Ovary (tissue), 10 donors: ENCODE measurements at regions of chr16 and their contacts with region 1.

Region 1: GRCh38 chr16:636206-637080 is at the start of gene METTL26:
- DNase-seq: peak; percentile 95 to 96 (median 95)
- H3K4me3 ChIP-seq: peak within 1 kb of the TSS; percentile 88
- H3K27ac ChIP-seq: peak within 1 kb of the TSS; percentile 84 to 96
- H3K4me1 ChIP-seq: peaks cover 10% of the 10 kb centered on the region
- H3K27me3 ChIP-seq: no peaks in the 10 kb centered on the region
- CTCF ChIP-seq: peak in 1 of 3 donors; percentile 29
- EP300 ChIP-seq: no peak
- POLR2A ChIP-seq: peak; percentile 66
- total RNA-seq, gene METTL26: 61.8 to 139 (median 75.9) TPM

Region 2: GRCh38 chr16:700684-701584 is 64.5 kb after region 1 on chr16:
- intact Hi-C with region 1: no loop called
- DNase-seq: peak in 2 of 5 donors; percentile 66 to 75
- H3K4me3 ChIP-seq: no peak overlapping the region
- H3K27ac ChIP-seq: no peak overlapping the region
- H3K4me1 ChIP-seq: no peaks in the 10 kb centered on the region
- H3K27me3 ChIP-seq: peaks cover 7% of the 10 kb centered on the region
- CTCF ChIP-seq: no peak
- EP300 ChIP-seq: no peak
- POLR2A ChIP-seq: no peak

Region 3: GRCh38 chr16:1959269-1960049 is 1323.0 kb after region 1 on chr16 and contains the start of gene NDUFB10:
- intact Hi-C with region 1: loop called in 1 of 4 experiments (anchors 10 kb)
- DNase-seq: peak; percentile 87 to 95 (median 93)
- H3K4me3 ChIP-seq: peak within 1 kb of the TSS; percentile 75
- H3K27ac ChIP-seq: peak within 1 kb of the TSS in 1 of 2 donors; percentile 55
- H3K4me1 ChIP-seq: peaks cover 9% of the 10 kb centered on the region
- H3K27me3 ChIP-seq: no peaks in the 10 kb centered on the region
- CTCF ChIP-seq: peak; percentile 68 to 74 (median 70)
- EP300 ChIP-seq: no peak
- POLR2A ChIP-seq: peak; percentile 44
- total RNA-seq, gene NDUFB10: 81.5 to 133 (median 95.4) TPM